ENCODE measurements at regions of chr5 and their contacts with region 1.

Region 1: DNA sequence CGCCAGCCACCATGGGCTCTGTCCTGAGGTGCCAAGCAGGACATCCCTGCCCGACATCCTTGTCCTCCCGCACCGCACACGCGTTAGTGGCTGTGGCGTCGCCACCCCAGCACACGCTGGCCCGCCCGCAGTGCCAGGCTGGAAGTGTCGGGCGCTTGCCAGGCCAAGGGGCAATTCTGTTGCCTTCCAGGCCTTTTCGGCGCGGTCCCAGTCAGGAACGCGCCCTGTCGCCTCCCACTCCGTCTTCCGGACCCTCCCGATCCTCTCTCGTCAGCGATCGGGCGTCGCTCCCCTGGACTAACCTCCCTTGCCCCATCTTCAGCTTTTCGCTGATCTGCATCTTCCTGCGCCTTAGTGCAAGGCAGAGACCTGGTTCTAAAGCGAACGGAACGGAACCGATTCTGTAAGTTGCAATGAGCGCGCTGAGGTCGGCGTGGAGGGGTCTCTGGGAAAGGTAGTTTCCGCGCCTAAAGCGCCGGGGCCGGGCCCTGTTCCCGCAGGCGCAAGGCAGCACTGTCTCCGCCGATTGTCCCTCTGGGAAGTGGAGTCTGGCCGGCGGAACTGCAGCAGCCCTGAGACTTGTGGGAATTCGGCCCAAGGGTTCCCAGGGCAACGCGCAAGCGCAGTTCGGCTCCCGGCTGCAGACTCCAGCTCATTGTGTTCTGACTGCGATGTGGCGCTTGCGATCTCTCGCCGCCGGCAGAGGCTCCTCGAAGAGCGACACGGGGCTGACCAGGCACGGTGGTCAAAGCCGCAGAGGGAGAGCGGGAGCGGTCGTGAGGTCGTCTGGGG is at the start of gene ZNF454:
- DNase-seq: peak; percentile 94 to 95
- ATAC-seq: peak; percentile 98 to 99 (median 99)
- H3K4me3 ChIP-seq: peak within 1 kb of the TSS; percentile 54 to 89 (median 76)
- H3K27ac ChIP-seq: peak within 1 kb of the TSS in 9 of 10 donors; percentile 75 to 86 (median 83)
- H3K4me1 ChIP-seq: peaks cover 0 to 19% (median 11%) of the 10 kb centered on the region in 9 donors
- H3K27me3 ChIP-seq: peaks cover 0 to 19% (median 0%) of the 10 kb centered on the region in 7 donors
- CTCF ChIP-seq: peak in 1 of 9 donors; percentile 8
- total RNA-seq, gene ZNF454: 1.4 to 2.7 (median 1.7) TPM

Region 2: DNA sequence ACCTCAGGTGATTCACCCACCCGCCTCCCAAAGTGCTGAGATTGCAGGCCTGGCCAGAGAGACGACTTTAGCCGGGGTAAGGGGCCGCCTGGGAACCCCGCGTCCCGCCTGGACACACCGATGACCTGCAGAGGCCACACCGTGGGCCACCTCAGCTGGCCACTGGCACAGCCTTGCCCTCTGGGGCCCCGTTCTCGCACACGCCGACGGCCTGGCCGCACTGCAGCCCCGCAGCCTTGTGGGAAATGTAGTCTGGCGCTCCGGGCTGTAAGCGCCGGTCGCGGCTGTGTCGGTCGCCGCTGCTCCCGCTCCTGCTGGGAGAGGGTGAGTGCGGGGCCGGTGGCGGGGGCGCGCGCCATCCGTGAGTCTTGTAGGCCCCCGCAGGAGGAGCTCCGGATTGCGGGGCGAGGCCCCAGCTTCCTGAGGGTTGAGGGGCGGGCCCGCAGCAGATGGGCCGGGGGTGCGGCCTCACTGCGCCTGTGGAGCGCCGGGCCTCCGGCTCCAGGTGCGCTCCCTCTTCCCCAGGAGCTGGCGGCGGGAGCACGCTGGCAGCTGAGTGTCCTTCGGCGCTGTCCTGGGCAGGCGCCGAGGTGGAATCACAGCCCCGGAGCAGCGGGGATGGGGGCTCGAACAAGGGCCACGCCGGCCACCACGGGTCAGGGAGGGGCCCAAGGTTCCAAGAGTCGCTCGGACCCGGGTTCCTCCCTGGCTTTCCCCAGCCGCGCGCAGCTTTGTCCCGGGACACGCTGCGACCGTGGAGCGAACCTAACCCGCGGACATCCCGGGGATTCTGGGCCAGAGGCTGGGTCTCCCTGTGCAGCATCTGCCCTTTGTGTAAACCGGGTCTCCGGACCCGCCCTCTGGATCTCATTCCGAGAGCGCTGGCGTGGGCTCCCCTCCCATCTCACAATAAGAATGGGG is 44.9 kb before region 1 on chr5 and contains the start of gene ZFP2:
- intact Hi-C with region 1: loop called in 3 of 10 experiments (anchors 2 to 10 kb)
- DNase-seq: peak; percentile 57 to 73
- ATAC-seq: peak; percentile 94 to 99 (median 98)
- H3K4me3 ChIP-seq: peak within 1 kb of the TSS; percentile 69 to 98 (median 88)
- H3K27ac ChIP-seq: peak within 1 kb of the TSS in 9 of 10 donors; percentile 56 to 80 (median 77)
- H3K4me1 ChIP-seq: peaks cover 0 to 16% (median 6%) of the 10 kb centered on the region in 9 donors
- H3K27me3 ChIP-seq: peaks cover 0 to 13% (median 0%) of the 10 kb centered on the region in 7 donors
- CTCF ChIP-seq: peak in 1 of 9 donors; percentile 11
- total RNA-seq, gene ZFP2: 0.77 to 1.7 (median 1.1) TPM

Region 3: DNA sequence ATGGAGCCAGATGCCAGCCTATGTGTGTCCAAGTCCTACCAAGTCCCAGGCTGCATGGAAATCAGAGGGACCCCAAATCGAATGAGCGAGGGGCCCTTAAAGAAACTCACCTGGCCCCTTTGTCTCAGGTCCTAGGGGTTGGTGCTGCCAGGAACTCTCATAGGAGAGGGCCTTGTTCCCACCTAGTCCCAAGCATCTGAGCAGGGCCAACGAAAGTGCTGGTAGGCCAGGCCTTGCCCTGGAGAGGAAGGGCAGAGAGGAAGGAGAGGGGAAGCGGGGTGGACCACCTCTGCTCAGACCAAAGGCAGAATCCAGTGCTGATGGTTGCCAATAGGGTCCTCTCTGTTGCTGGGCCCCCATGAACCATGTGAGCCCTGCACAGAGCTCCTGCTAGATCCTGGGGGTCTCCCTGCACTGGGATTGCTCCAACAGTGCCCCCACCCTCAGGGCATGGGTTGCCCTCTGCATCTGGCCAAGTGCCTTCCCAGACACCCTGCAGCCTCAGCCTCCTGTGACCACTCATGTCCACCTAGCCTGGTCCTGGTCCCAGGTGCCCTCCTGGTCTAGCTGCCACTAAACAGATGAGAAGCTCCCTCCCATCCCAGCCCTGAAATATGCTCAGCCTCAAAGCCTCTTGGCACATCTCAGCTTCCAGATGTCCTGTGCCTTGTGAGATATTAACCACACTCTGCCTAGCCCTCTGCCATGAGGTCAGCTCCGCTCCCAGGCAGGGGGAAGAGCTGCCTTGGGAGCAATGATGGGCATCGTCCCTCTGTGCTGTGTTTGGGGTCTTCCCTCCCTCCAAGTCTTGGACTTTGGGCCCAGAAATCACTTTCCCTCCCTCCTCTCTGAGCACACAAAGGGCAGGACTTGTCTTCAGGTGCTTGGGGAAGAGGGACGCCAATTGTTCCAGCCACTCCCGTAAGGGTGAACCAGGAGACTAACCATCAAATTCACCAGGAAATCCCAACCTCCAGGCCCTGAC is 294.9 kb after region 1 on chr5:
- intact Hi-C with region 1: no loop called
- DNase-seq: no peak
- ATAC-seq: no peak
- H3K4me3 ChIP-seq: no peak overlapping the region
- H3K27ac ChIP-seq: no peak overlapping the region
- H3K4me1 ChIP-seq: peaks cover 0 to 6% (median 0%) of the 10 kb centered on the region in 9 donors
- H3K27me3 ChIP-seq: peaks cover 0 to 20% (median 0%) of the 10 kb centered on the region in 7 donors
- CTCF ChIP-seq: no peak